Sigmoid colon (tissue), 7 donors: ENCODE measurements at regions of chr3 and their contacts with region 1.

Region 1: DNA sequence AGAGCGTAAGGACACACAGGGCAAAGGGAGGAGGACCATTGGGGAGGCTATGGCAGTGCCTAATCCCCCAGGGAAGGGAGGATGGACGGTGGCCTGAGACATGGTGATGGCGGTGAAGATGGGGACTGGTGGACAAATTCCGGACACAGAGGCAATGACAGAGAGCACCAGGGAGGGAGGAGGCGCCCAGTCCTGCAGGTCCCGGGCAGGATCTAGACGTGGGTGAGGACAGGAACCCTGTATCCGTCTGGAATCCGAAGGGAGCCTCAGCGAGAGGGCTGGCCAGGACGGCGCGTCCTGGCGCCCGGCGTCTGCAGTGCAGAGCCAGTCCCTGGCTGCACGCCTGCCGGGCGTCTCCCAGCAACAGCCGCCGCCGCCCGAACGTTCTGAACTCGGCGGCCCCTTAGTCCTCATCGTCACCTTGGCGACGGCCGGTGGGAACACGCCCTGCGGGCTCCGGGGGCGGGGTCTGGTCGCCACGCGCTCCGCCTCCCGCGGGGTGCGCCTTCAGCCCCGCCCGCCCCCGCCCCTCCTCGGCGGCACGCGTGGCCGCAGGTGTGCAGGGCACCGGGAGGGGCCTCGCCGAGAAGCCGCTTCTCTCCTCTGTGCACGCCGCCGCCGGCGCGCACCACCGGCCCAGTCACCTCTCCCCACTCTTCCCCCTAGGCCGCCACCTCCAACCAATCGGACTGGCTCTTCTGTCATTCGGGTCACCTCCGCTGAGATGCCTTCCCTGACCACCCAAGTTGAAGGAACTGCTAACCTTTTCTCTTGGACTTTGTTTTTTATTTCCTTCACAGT is 11.6 kb downstream of the XIRP1 start:
- DNase-seq: peak; percentile 96
- H3K4me3 ChIP-seq: peak overlapping the region; percentile 3 to 47 (median 44)
- H3K27ac ChIP-seq: peak overlapping the region; percentile 87 to 95 (median 92)
- H3K4me1 ChIP-seq: peaks cover 0 to 63% (median 36%) of the 10 kb centered on the region in 4 donors
- H3K27me3 ChIP-seq: no peaks in the 10 kb centered on the region
- CTCF ChIP-seq: peak in 1 of 4 experiments; percentile 25
- EP300 ChIP-seq: peak in 1 of 4 donors; percentile 80
- POLR2A ChIP-seq: peak in 1 of 2 donors; percentile 12

Region 2: GRCh38 chr3:39150799-39151631 is 29.7 kb before region 1 on chr3:
- intact Hi-C with region 1: loop called (anchors 1 kb)
- DNase-seq: peak; percentile 96
- H3K4me3 ChIP-seq: peak overlapping the region; percentile 90 to 100 (median 100)
- H3K27ac ChIP-seq: peak overlapping the region; percentile 97 to 100 (median 100)
- H3K4me1 ChIP-seq: peaks cover 0 to 74% (median 72%) of the 10 kb centered on the region in 4 donors
- H3K27me3 ChIP-seq: no peaks in the 10 kb centered on the region
- CTCF ChIP-seq: no peak
- EP300 ChIP-seq: peak in 2 of 4 donors; percentile 7 to 62
- POLR2A ChIP-seq: no peak

Region 3: DNA sequence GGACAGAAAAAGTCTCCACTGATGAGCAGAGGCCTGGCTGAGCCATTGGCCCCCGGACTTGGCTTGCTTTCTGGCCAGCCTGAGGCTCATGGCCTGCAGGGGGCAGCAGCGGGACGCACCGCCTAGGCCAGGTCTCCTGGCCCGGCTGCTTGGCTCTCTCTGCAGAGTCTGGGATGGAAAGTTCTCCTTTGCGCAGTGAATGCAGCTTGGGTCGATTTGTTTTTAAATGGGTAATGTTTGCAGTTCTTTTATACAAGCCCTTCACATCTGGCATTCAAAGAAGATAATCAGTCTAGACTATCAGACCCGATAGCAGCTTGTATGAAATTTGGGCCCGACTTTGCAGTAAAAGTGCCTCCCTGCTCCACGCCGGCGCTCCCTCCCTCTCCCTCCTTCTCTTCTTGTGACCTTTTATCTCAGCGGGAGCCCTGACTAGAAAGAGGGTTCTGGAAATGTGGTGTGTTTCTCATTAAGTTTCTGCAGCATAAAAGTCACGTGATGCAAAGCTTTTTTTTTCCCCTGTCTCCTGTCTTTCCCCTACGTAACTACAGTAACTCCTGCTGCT is 1404.0 kb after region 1 on chr3:
- intact Hi-C with region 1: no loop called
- DNase-seq: peak; percentile 92
- H3K4me3 ChIP-seq: peak overlapping the region in 2 of 4 donors; percentile 8 to 10
- H3K27ac ChIP-seq: peak overlapping the region in 2 of 4 donors; percentile 26 to 30
- H3K4me1 ChIP-seq: peaks cover 0 to 10% (median 7%) of the 10 kb centered on the region in 4 donors
- H3K27me3 ChIP-seq: no peaks in the 10 kb centered on the region
- CTCF ChIP-seq: peak; percentile 53 to 95 (median 86)
- EP300 ChIP-seq: no peak
- POLR2A ChIP-seq: no peak